ENCODE measurements at regions of chr6 and their contacts with region 1.

Region 1: DNA sequence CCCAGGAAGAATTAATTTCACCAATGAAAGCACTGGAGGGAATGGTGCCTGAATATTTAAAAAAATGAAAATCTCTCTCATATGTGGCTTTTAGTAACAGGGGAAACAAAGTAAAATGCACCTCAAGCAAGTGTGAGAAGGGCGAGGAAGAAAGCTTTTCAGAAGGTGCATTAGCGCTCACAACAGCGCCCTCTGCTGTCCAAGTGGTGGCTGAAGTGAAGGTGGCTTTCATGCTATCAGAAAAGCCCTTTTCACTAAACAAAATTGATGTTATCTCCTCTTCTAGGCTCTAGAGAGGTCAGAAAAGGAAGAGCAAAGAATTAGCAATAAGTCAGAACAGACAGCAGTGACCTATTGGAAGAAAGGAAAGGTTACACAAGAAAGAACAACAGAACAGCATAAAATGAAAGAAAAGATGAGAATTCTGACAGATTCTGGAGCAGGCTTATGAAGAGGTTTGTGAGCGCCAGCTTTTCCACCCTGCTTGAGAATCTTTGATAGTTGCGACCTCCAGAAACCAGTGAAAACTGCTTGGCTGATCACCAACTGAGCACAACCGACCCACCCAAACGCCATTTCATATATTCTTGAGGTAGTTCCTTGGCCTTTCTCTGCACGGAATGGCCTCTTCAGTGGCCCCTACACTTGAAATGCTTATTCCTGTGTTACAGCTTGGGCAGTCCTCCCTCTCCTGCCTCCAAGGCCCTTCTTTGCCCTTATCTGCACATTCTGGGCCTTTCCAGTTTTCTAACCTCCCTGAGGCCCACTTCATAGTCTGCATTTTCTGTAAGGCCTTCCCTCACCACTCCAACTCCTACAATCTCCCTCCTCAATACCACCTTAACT is 45.3 kb downstream of the SMLR1 start:
- DNase-seq: peak; percentile 13
- H3K4me3 ChIP-seq: no peak overlapping the region
- CTCF ChIP-seq: peak; percentile 91

Region 2: GRCh38 chr6:130322673-130323268 is 549.7 kb before region 1 on chr6:
- in situ Hi-C with region 1: loop called (anchors 25 kb)
- DNase-seq: peak; percentile 64
- H3K4me3 ChIP-seq: no peak overlapping the region
- CTCF ChIP-seq: peak; percentile 80